Left cardiac atrium (tissue), 4 donors: ENCODE measurements at regions of chr19 and their contacts with region 1.

Region 1: GRCh38 chr19:55259540-55260210 is 858 bp upstream of the PPP6R1 start:
- DNase-seq: peak; percentile 55
- ATAC-seq: no peak

Region 2: DNA sequence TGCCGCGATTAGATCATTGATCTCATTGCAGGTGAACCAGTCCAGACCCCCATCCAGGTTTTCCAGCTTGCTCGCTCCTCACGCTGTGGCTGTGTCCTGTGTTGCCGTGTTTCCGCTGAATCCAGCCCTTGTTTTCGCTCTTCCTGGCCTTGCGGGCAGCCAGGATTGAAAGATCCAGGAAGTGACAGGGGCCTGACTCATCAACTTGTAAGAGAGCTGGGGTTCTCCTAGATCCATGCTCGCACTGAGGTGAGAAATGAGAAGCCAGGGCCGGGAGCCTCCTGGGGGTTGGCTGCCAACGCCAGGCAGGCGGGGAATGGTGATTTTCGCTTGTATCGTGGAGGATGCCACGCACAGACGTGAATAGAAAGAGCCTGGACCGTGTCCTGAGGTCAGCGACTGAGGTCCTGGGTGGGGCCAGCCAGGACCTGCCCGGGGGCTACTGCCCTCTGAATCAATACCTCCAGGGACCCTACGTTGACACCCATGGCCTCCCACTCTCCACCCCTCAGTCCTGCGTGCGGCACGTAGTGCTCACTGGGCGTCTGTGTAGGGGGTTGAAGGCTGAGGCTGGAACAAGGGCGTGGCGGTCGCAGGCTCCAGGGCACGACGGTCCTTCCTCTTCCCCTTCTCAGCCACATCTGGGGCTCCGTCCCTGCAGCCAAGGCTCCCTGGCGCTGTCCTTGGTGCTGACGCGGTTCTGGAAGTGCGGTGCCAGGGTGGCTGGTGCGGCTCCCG is 43.0 kb before region 1 on chr19:
- intact Hi-C with region 1: loop called in 1 of 2 experiments (anchors 10 kb)
- DNase-seq: peak; percentile 86
- ATAC-seq: peak; percentile 81 to 95